Psoas muscle (tissue), 8 donors: ENCODE measurements at regions of chr5 and their contacts with region 1.

Region 1: DNA sequence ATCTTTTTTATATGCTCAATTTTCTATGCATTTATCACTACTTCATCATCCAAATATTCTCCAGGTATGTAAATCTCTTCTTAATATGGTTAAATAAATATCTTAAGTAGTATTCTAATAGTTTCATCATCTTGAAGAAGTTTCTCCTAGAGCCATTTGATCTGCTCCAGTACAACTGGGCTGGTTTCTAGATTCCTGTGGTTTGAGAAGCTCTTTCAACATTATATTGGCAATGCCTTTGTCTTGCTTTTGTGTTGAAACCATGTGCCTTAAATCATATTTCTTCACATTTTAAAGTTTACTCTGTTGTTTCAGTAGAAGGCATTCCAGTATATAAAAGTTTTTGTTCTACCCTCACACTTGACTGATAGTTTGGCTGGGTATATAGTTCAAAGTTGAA is 27.6 kb downstream of the MBLAC2 start:
- DNase-seq: no peak
- ATAC-seq: no peak
- H3K4me3 ChIP-seq: no peak overlapping the region
- H3K27ac ChIP-seq: no peak overlapping the region
- H3K4me1 ChIP-seq: no peaks in the 10 kb centered on the region
- H3K27me3 ChIP-seq: no peaks in the 10 kb centered on the region
- CTCF ChIP-seq: no peak

Region 2: DNA sequence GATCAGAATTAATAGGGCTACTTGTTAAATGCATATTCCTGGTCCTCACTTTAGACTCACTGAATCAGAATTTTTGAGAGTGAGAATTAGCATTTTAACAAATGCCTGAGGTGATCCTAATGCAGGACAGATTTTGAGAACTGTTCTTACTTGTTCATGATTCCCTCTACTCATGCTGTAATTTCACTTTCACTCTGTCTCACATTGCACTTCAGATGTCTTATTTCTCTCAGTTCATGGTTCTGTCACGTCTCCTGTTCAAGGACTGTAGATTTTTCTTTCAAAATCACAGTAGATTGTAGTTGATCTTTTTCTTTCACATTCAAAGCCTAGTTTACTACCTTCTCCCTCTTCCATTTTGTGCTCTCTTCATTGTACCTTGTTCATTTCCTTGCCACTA is 166.0 kb after region 1 on chr5:
- intact Hi-C with region 1: loop called in 1 of 2 experiments (anchors 10 kb)
- DNase-seq: no peak
- ATAC-seq: no peak
- H3K4me3 ChIP-seq: no peak overlapping the region
- H3K27ac ChIP-seq: no peak overlapping the region
- H3K4me1 ChIP-seq: no peaks in the 10 kb centered on the region
- H3K27me3 ChIP-seq: peaks cover 0 to 2% (median 0%) of the 10 kb centered on the region in 3 donors
- CTCF ChIP-seq: no peak